ENCODE measurements at regions of chr7 and their contacts with region 1.

Region 1: GRCh38 chr7:26667500-26668133 is 196.8 kb downstream of the SKAP2 start:
- DNase-seq: peak; percentile 43 to 54 (median 43)
- H3K4me3 ChIP-seq: no peak overlapping the region
- H3K4me3 Mint-ChIP-seq: no peak overlapping the region
- H3K27ac ChIP-seq: no peak overlapping the region
- H3K27ac Mint-ChIP-seq: peak overlapping the region in 1 of 7 donors; percentile 24
- H3K4me1 ChIP-seq: peaks cover 7 to 14% of the 10 kb centered on the region in 2 donors
- H3K4me1 Mint-ChIP-seq: peaks cover 12% of the 10 kb centered on the region
- H3K27me3 ChIP-seq: no peaks in the 10 kb centered on the region
- H3K27me3 Mint-ChIP-seq: no peaks in the 10 kb centered on the region
- CTCF ChIP-seq: peak; percentile 73

Region 2: GRCh38 chr7:25894902-25895791 is 772.5 kb before region 1 on chr7:
- intact Hi-C with region 1: loop called in 1 of 2 experiments (anchors 10 kb)
- DNase-seq: peak; percentile 87 to 95 (median 89)
- H3K4me3 ChIP-seq: peak overlapping the region in 1 of 3 experiments; percentile 48
- H3K4me3 Mint-ChIP-seq: peak overlapping the region; percentile 50 to 83
- H3K27ac ChIP-seq: no peak overlapping the region
- H3K27ac Mint-ChIP-seq: peak overlapping the region in 6 of 7 donors; percentile 75 to 89 (median 80)
- H3K4me1 ChIP-seq: peaks cover 19 to 29% of the 10 kb centered on the region in 2 donors
- H3K4me1 Mint-ChIP-seq: peaks cover 36% of the 10 kb centered on the region
- H3K27me3 ChIP-seq: peaks cover 80 to 83% of the 10 kb centered on the region in 2 donors
- H3K27me3 Mint-ChIP-seq: peaks cover 74 to 88% (median 78%) of the 10 kb centered on the region in 3 donors
- CTCF ChIP-seq: peak; percentile 88

Region 3: DNA sequence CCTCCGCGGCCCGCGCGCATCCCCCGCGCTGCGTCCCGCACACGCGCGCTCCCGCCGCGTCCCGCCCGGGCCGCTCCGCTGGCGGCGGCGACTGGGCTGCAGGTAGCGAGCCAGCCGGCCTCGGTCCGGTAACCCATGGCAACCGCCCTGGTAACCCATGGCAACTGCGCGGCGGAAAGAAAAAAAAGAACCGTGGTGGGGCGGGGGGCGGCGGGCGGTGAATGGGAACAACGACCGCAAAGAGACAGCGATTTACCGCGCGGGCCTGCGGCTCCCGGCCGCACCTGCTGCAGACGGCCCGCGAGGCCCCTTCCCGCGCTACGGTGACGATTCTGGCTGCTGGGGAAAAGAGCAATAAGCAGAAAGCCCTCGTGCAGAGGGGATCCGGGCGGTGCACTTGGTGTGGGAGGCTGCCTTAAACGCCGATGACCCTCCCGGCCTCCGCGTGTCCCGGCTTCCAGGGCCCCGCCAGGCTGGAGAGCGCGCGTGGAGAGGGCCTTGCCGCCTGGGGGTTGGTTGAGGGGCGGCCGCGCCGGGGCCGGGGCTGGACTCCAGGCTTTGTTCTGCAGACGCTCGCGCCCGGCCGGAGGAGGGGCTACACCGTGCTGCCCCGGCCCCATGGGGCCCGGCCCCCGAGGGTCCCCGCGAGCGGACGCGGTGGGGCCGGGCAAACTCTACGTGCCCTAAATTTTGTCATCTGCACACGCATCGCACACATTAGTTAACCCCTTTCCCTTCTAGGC is 291.3 kb before region 1 on chr7:
- intact Hi-C with region 1: loop called (anchors 5 to 10 kb)
- DNase-seq: peak in 1 of 3 donors; percentile 15
- H3K4me3 ChIP-seq: peak overlapping the region; percentile 3 to 71 (median 34)
- H3K4me3 Mint-ChIP-seq: peak overlapping the region; percentile 62 to 87
- H3K27ac ChIP-seq: no peak overlapping the region
- H3K27ac Mint-ChIP-seq: peak overlapping the region in 1 of 7 donors; percentile 53
- H3K4me1 ChIP-seq: peaks cover 17 to 28% of the 10 kb centered on the region in 2 donors
- H3K4me1 Mint-ChIP-seq: peaks cover 27% of the 10 kb centered on the region
- H3K27me3 ChIP-seq: peaks cover 22 to 39% of the 10 kb centered on the region in 2 donors
- H3K27me3 Mint-ChIP-seq: peaks cover 27 to 37% (median 29%) of the 10 kb centered on the region in 3 donors
- CTCF ChIP-seq: no peak

Region 4: DNA sequence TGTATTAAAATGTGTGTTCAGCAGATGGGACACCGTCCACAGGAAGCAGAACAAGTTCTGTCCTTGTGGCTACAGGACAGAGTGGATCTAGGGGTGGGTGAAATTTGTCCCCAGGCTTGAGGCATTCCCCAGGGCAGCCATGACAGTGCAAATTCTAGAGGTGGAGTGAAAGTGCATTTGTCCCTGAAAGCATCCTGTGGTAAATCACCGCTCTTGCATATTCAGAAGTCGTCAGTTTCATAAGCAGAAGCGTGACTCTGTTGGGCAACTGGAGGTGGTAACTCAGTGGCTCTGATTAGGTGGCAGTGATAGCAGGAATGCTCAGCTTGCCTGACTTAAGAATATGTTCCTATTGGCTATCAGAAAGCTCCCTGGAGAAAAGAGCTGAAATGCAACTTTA is 279.4 kb before region 1 on chr7:
- intact Hi-C with region 1: loop called in 1 of 2 experiments (anchors 10 kb)
- DNase-seq: peak; percentile 51 to 82 (median 53)
- H3K4me3 ChIP-seq: no peak overlapping the region
- H3K4me3 Mint-ChIP-seq: peak overlapping the region in 1 of 2 donors; percentile 48
- H3K27ac ChIP-seq: no peak overlapping the region
- H3K27ac Mint-ChIP-seq: peak overlapping the region in 1 of 7 donors; percentile 11
- H3K4me1 ChIP-seq: peaks cover 9 to 11% of the 10 kb centered on the region in 2 donors
- H3K4me1 Mint-ChIP-seq: peaks cover 10% of the 10 kb centered on the region
- H3K27me3 ChIP-seq: peaks cover 4 to 10% of the 10 kb centered on the region in 2 donors
- H3K27me3 Mint-ChIP-seq: peaks cover 13 to 22% (median 18%) of the 10 kb centered on the region in 3 donors
- CTCF ChIP-seq: no peak

Region 5: GRCh38 chr7:26574476-26574875 is 93.1 kb before region 1 on chr7:
- intact Hi-C with region 1: no loop called
- DNase-seq: no peak
- H3K4me3 ChIP-seq: no peak overlapping the region
- H3K4me3 Mint-ChIP-seq: no peak overlapping the region
- H3K27ac ChIP-seq: no peak overlapping the region
- H3K27ac Mint-ChIP-seq: no peak overlapping the region
- H3K4me1 ChIP-seq: no peaks in the 10 kb centered on the region
- H3K4me1 Mint-ChIP-seq: no peaks in the 10 kb centered on the region
- H3K27me3 ChIP-seq: no peaks in the 10 kb centered on the region
- H3K27me3 Mint-ChIP-seq: peaks cover 0 to 8% (median 4%) of the 10 kb centered on the region in 3 donors
- CTCF ChIP-seq: no peak

Region 6: DNA sequence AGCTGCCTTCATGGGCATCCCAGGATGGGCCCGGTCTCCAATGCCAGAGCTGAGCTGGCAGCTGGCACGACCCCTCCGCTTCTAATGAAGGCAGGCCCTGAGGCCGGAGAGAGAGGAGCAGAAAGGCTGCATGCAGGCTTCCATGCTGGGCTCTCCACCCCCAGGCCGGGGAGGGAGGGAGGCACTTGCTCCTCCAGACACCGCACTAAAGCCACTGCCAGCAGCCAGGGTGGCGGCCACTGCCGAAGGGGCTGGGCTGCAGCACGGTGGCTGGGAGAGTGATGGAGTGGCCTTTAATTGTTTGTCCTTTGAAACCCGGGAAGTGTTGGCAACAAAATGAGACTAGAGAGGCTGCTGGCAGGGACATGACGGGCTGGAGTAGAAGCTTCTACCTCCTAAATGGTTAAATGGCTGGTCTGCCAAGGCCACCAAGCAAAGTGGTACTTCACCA is 39.7 kb before region 1 on chr7:
- intact Hi-C with region 1: no loop called
- DNase-seq: no peak
- H3K4me3 ChIP-seq: no peak overlapping the region
- H3K4me3 Mint-ChIP-seq: no peak overlapping the region
- H3K27ac ChIP-seq: no peak overlapping the region
- H3K27ac Mint-ChIP-seq: no peak overlapping the region
- H3K4me1 ChIP-seq: no peaks in the 10 kb centered on the region
- H3K4me1 Mint-ChIP-seq: no peaks in the 10 kb centered on the region
- H3K27me3 ChIP-seq: no peaks in the 10 kb centered on the region
- H3K27me3 Mint-ChIP-seq: no peaks in the 10 kb centered on the region
- CTCF ChIP-seq: no peak